ENCODE measurements at regions of chr6 and their contacts with region 1.

Region 1: GRCh38 chr6:33585403-33586107 is 5.5 kb upstream of the BAK1 start:
- DNase-seq: peak; percentile 78 to 84
- H3K4me3 ChIP-seq: no peak overlapping the region
- H3K27ac ChIP-seq: no peak overlapping the region
- H3K4me1 ChIP-seq: peaks cover 0 to 16% (median 10%) of the 10 kb centered on the region in 4 donors
- H3K27me3 ChIP-seq: no peaks in the 10 kb centered on the region
- CTCF ChIP-seq: peak; percentile 97 to 99

Region 2: GRCh38 chr6:33696548-33697518 is 111.3 kb after region 1 on chr6:
- intact Hi-C with region 1: loop called (anchors 5 kb)
- DNase-seq: peak in 1 of 2 donors; percentile 32
- H3K4me3 ChIP-seq: no peak overlapping the region
- H3K27ac ChIP-seq: peak overlapping the region; percentile 43 to 50
- H3K4me1 ChIP-seq: peaks cover 0 to 48% (median 21%) of the 10 kb centered on the region in 4 donors
- H3K27me3 ChIP-seq: no peaks in the 10 kb centered on the region
- CTCF ChIP-seq: no peak

Region 3: GRCh38 chr6:34154668-34155447 is 569.3 kb after region 1 on chr6:
- intact Hi-C with region 1: loop called (anchors 5 kb)
- DNase-seq: peak in 1 of 2 donors; percentile 66
- H3K4me3 ChIP-seq: peak overlapping the region in 1 of 2 donors; percentile 16
- H3K27ac ChIP-seq: no peak overlapping the region
- H3K4me1 ChIP-seq: peaks cover 0 to 10% (median 7%) of the 10 kb centered on the region in 4 donors
- H3K27me3 ChIP-seq: peaks cover 0 to 66% of the 10 kb centered on the region in 2 donors
- CTCF ChIP-seq: peak; percentile 94 to 98

Measured in tibial artery (tissue), 4 donors.